Activated naive CD4-positive, alpha-beta T cell treated with anti-CD3 and anti-CD28 coated beads for 36 hours (primary cell): ENCODE measurements at regions of chr4 and their contacts with region 1.

Region 1: GRCh38 chr4:16916719-16917337 is 18.4 kb upstream of the LDB2 start:
- DNase-seq: peak; percentile 90
- H3K4me3 Mint-ChIP-seq: no peak overlapping the region
- H3K27ac Mint-ChIP-seq: no peak overlapping the region
- H3K4me1 Mint-ChIP-seq: no peaks in the 10 kb centered on the region
- H3K27me3 Mint-ChIP-seq: no peaks in the 10 kb centered on the region

Region 2: DNA sequence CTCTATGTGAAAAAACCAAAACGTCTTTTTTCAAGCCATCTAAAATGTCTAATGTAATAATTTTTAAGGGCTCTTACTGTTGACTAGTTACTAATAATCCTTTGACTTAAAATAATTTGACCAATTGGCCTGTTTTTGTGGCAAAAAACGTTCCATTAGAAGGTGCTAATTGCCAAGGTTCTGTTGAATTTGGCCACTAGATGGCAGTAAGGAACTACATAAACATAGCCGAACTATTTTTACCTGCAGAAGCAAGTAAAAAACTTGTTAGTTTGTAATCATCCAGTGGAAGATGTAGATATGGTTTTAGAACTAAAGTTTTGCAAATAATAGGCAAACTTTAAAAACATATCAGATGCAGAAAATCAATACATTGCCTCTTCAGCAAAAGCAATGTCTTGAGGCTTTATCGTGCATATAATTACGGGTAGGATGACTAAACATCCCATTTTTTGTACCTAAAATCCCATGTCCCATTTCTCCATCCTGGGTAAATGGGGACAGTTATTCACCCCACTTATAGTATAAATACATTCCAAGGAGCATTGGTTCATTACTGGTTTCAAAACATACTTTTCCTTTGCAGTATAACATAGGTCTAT is 890.6 kb before region 1 on chr4:
- CTCF ChIA-PET with region 1: no interaction called
- intact Hi-C with region 1: loop called (anchors 5 kb)
- DNase-seq: peak; percentile 26
- H3K4me3 Mint-ChIP-seq: no peak overlapping the region
- H3K27ac Mint-ChIP-seq: no peak overlapping the region
- H3K4me1 Mint-ChIP-seq: no peaks in the 10 kb centered on the region
- H3K27me3 Mint-ChIP-seq: peaks cover 13% of the 10 kb centered on the region

Region 3: DNA sequence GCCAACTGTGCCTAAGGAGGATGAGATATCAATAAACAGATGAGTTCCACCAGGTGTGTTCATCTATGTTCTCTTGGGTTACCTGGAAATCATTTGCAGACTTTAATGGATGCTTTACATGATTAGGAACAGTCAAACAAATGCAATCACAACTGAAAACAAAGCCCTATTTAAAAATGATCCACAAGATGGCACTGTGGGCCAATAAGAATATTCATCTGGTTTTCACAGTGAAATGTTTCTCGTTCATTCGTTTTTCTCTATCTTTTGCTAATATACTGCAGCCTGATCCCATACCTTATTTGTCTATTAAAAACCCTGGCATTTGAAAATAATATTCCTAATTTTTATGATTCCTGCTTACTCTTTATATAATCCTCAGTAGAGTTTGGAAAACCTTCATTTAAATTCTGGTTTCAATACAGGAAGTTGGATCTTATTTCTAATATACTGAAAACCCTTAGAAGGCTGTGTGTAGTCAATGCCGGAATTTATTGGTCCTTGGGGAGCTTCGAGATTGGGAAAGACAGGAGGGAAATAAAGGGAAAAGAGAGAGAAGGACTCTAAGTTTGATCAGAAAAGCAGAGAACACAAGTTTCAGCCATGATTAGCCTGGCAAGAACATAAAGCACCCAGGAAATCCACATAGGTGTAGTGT is 626.8 kb before region 1 on chr4:
- CTCF ChIA-PET with region 1: no interaction called
- intact Hi-C with region 1: loop called (anchors 1 kb)
- DNase-seq: peak; percentile 7
- H3K4me3 Mint-ChIP-seq: no peak overlapping the region
- H3K27ac Mint-ChIP-seq: no peak overlapping the region
- H3K4me1 Mint-ChIP-seq: peaks cover 5% of the 10 kb centered on the region
- H3K27me3 Mint-ChIP-seq: peaks cover 16% of the 10 kb centered on the region

Region 4: GRCh38 chr4:16733509-16733908 is 183.3 kb before region 1 on chr4:
- CTCF ChIA-PET with region 1: no interaction called
- intact Hi-C with region 1: no loop called
- DNase-seq: no peak
- H3K4me3 Mint-ChIP-seq: no peak overlapping the region
- H3K27ac Mint-ChIP-seq: no peak overlapping the region
- H3K4me1 Mint-ChIP-seq: no peaks in the 10 kb centered on the region
- H3K27me3 Mint-ChIP-seq: peaks cover 6% of the 10 kb centered on the region

Region 5: DNA sequence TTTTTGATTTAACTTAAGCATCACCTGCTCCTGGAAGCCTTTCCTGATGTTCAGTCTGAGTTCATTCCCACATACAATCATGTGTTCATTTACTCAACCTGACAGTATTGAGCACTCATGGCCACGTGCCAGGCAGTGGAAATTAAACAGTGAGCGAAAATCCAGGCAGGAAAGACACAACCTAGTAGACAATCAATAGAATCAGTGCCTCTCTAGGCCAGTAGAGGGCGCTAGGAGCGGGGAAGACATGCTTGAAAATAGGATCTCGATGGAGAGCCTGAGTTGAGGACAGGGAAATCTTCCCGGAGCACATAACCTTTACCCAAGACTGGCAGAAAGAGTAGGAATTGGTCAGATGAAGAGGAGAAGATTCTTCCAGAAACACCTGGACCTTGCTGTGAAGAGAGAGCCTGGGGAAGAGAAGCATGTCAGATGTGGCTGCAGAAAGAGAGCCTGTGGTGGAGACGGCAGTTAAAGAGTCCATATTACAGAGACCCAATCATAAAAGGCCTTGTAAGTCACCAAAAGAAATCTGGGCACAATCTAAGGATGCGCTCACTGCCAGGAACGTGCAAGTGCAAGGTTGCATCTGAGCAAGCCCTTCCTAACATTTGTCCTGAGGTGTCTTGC is 121.9 kb before region 1 on chr4:
- CTCF ChIA-PET with region 1: interaction called, 22 read pairs
- intact Hi-C with region 1: loop called (anchors 1 kb)
- DNase-seq: peak; percentile 67
- H3K4me3 Mint-ChIP-seq: no peak overlapping the region
- H3K27ac Mint-ChIP-seq: no peak overlapping the region
- H3K4me1 Mint-ChIP-seq: no peaks in the 10 kb centered on the region
- H3K27me3 Mint-ChIP-seq: no peaks in the 10 kb centered on the region

Region 6: DNA sequence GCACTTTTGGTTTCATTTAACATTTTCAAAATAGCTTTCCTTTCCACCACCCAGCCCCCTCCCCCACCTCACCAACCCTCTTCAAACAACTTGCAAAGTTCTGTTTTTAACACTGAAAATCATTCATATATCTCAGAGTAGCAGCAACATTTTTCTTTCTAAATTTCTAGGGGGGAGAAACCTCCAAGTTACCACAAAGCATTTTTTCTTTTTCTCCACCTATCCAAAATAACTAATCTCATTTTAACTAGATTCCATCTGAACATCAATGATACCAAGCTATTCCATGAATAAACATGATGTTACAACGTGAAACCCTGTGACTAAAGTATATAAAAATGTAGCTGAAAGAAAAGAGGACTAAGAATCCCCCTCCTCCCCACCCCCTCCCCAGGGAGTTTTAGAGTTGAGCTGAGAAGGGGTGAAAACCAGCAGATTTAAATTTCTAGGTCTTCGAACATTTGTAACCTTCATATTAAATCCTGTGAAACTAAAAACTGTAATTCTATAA is 23.6 kb before region 1 on chr4:
- CTCF ChIA-PET with region 1: interaction called, 9 read pairs
- intact Hi-C with region 1: loop called (anchors 1 kb)
- DNase-seq: peak; percentile 53
- H3K4me3 Mint-ChIP-seq: peak overlapping the region; percentile 15
- H3K27ac Mint-ChIP-seq: peak overlapping the region; percentile 13
- H3K4me1 Mint-ChIP-seq: peaks cover 42% of the 10 kb centered on the region
- H3K27me3 Mint-ChIP-seq: peaks cover 2% of the 10 kb centered on the region

Region 7: DNA sequence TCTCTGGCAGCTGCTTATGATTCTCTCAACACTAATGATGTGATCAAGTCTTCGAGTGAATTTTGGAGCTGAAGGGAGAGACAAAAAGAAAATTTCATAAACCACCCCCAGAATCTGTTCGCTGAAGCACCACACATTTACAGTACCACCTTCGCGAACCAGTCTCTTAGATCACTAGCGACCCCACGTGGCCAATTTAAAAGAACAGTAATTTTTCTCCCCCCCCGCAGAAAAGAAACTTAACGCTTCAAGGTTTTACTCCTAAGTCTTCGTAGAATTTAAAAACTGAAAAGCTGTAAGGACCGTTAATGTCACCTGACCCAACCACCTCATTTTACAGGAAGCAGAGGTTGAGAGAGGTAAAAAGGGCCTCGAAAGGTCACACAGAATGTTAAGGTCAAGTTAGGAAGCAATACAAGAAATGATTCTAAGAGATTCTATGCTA is 407.6 kb after region 1 on chr4:
- CTCF ChIA-PET with region 1: interaction called, 8 read pairs
- intact Hi-C with region 1: loop called (anchors 1 kb)
- DNase-seq: peak; percentile 71
- H3K4me3 Mint-ChIP-seq: peak overlapping the region; percentile 19
- H3K27ac Mint-ChIP-seq: no peak overlapping the region
- H3K4me1 Mint-ChIP-seq: peaks cover 17% of the 10 kb centered on the region
- H3K27me3 Mint-ChIP-seq: no peaks in the 10 kb centered on the region

Region 8: DNA sequence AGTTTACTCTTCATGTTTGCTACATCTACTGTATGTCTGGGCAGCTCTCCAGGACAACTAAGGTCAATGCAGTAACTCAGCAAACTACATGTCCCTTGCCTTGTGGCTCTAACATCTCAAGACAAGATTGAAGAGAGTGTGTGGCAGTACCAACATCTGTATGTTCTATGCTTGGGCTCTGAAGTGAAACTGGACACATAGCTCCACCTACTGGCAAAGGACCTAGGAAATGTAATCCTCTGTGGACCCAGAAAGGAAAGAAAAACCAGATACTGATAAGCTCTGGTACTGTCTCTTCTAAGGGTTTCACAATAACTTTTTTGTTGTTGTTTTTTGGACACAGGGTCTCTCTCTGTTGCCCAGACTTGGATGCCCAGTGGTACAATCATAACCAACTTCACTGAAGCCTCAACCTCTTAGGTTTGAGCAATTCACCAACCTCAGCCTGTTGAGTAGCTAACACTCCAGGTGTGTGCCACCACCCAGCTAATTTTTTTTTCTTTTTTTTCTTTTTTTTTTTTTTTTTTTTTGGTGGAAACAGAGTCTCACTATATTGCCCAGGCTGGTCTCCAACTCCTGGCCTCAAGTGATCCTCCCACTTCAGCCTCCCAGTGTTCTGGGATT is 531.0 kb after region 1 on chr4:
- CTCF ChIA-PET with region 1: interaction called, 4 read pairs
- intact Hi-C with region 1: loop called (anchors 1 kb)
- DNase-seq: peak; percentile 79
- H3K4me3 Mint-ChIP-seq: no peak overlapping the region
- H3K27ac Mint-ChIP-seq: no peak overlapping the region
- H3K4me1 Mint-ChIP-seq: no peaks in the 10 kb centered on the region
- H3K27me3 Mint-ChIP-seq: no peaks in the 10 kb centered on the region